Tibial artery (tissue), 4 donors: ENCODE measurements at regions of chr6 and their contacts with region 1.

Region 1: GRCh38 chr6:69835414-69836179 is 30.8 kb upstream of the COL19A1 start:
- DNase-seq: no peak
- H3K4me3 ChIP-seq: no peak overlapping the region
- H3K27ac ChIP-seq: no peak overlapping the region
- H3K4me1 ChIP-seq: no peaks in the 10 kb centered on the region
- H3K27me3 ChIP-seq: no peaks in the 10 kb centered on the region
- CTCF ChIP-seq: peak; percentile 74 to 85

Region 2: DNA sequence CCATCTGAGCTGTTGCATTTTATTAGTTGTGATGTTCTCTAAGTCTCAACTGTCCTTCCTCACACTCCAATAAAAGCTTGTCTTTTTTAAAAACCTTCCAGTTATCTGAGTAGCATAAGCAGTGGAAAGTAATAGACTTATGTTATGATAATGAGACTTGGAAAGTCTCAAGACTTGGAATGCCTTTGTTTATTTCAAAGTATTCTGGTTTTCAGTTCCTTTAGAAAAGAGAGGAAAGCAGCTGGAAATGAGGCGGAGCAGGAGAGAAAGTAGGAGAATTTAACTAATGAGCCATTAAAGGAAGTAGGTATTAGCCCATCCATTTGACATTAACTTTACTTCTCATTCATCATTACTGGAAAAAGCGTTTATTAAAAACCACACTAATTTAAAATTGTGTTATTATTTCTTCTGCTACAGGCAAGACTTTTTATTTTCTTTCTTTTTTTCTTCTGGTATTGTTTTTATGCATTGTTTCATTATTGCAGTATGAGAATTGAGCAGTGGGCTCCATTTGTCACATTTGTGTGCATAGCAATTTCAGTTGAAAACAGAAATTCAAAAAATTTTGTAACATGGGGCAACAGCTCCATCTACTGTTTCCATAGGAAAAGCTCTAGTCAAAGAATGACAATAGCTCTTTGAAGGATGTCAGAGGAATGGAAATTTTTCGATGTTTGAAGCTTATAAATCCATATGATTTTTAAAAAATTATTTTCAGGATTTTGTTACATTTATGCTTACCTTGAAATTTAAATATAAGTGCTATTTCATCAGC is 272.4 kb after region 1 on chr6:
- intact Hi-C with region 1: loop called (anchors 10 kb)
- DNase-seq: no peak
- H3K4me3 ChIP-seq: no peak overlapping the region
- H3K27ac ChIP-seq: no peak overlapping the region
- H3K4me1 ChIP-seq: no peaks in the 10 kb centered on the region
- H3K27me3 ChIP-seq: no peaks in the 10 kb centered on the region
- CTCF ChIP-seq: peak; percentile 59 to 67